Common myeloid progenitor, CD34-positive (primary cell): ENCODE measurements at regions of chr12 and their contacts with region 1.

Region 1: GRCh38 chr12:11765817-11766794 is 116.6 kb downstream of the ETV6 start:
- DNase-seq: peak; percentile 78 to 89 (median 86)
- H3K4me3 ChIP-seq: peak overlapping the region in 5 of 7 experiments; percentile 6 to 46 (median 30)
- H3K27ac ChIP-seq: peak overlapping the region; percentile 60 to 73
- H3K4me1 ChIP-seq: peaks cover 57 to 98% (median 94%) of the 10 kb centered on the region in 4 experiments
- H3K27me3 ChIP-seq: no peaks in the 10 kb centered on the region

Region 2: DNA sequence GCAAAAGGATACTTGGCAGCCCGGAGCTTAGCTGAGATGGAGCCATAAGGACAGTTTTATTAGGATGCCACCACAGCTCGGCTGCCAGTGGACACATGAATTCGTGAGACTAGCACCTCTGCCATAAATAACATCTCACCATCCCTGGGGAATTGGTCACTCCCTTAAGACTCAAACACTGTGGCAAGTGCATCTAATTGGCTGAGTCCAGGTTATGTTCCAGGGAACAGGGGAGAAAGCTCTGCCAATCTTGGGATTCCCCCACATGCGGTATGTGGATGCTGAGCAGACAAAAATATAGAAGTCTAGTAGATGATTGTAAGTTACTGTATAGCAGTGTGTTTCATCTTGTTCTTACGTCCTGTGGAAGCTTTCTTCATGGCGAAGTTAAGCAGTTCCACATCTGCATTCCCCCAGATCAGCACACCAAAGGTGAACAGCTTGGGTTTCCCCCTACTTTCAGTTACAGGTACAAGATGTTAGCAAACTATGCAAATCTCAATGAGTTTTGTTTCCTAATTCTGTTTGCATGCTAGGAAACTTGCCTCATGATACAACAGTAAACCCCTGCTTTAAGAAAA is 14.5 kb after region 1 on chr12:
- CTCF ChIA-PET with region 1: interaction called, 22 read pairs
- POLR2A ChIA-PET with region 1: interaction called, 4 read pairs
- DNase-seq: no peak
- H3K4me3 ChIP-seq: no peak overlapping the region
- H3K27ac ChIP-seq: peak overlapping the region in 1 of 2 experiments; percentile 9
- H3K4me1 ChIP-seq: peaks cover 4 to 91% (median 57%) of the 10 kb centered on the region in 4 experiments
- H3K27me3 ChIP-seq: no peaks in the 10 kb centered on the region

Region 3: DNA sequence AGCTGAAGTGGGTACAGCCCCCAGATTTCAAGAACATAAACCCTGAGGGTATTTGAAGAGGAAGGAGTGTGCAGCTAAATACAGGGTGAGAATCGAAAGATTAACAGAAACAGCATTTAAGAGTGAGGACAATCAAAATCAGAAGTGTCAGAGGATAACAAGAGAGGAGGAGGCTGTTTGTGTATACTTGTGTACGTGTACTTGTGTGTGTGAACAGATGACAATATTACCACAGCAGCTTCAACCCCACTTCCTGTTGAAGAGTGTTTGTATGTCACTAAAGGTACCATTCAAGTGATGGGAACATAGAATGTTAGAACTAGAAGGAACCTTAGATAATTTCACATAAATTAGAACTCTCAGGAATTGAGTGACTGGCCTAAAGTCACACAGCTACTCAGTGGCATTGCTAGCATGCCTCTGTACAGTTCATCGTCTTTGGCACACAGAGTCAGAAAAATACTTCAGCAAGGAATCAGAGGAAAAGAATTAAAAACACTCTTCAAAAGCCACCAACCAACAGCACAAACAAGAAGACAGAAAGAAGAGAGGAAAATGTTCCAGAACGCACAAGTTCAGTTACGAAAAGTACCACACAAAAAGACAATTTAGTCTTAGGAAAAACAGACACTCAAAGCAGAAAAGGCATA is 140.3 kb after region 1 on chr12:
- CTCF ChIA-PET with region 1: no interaction called
- POLR2A ChIA-PET with region 1: no interaction called
- DNase-seq: no peak
- H3K4me3 ChIP-seq: no peak overlapping the region
- H3K27ac ChIP-seq: no peak overlapping the region
- H3K4me1 ChIP-seq: peaks cover 0 to 4% (median under 1%) of the 10 kb centered on the region in 4 experiments
- H3K27me3 ChIP-seq: no peaks in the 10 kb centered on the region